Breast epithelium (tissue), 4 donors: ENCODE measurements at regions of chr6 and their contacts with region 1.

Region 1: GRCh38 chr6:162605881-162606280 is 121.7 kb downstream of the PRKN start:
- DNase-seq: no peak
- H3K4me3 ChIP-seq: no peak overlapping the region
- H3K27ac ChIP-seq: no peak overlapping the region
- H3K4me1 ChIP-seq: no peaks in the 10 kb centered on the region
- H3K27me3 ChIP-seq: no peaks in the 10 kb centered on the region
- CTCF ChIP-seq: no peak
- POLR2A ChIP-seq: no peak

Region 2: GRCh38 chr6:163036160-163036645 is 430.3 kb after region 1 on chr6:
- intact Hi-C with region 1: no loop called
- DNase-seq: no peak
- H3K4me3 ChIP-seq: no peak overlapping the region
- H3K27ac ChIP-seq: no peak overlapping the region
- H3K4me1 ChIP-seq: no peaks in the 10 kb centered on the region
- H3K27me3 ChIP-seq: no peaks in the 10 kb centered on the region
- CTCF ChIP-seq: no peak
- POLR2A ChIP-seq: no peak

Region 3: DNA sequence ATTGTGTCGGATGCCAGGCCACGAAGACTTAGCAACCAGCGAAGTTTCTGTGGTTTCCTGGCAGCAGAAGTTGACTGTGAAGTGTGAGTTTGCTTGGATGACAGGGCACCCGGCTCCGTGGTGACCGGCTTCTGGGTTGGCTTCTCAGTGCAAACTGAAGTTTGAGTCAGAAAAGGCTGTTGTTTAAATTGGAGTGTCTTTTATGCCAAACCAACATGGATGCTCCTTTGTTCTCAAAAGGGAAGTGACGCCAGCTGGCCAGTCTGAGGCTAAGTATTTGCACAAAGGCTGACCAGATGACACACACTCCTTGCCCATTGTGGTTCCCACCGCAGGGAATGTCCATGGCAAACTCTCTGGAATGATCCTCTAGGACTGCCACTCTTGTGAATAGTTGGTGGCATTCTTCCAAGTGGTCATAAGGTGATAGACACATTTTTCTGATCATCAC is 643.8 kb after region 1 on chr6:
- intact Hi-C with region 1: no loop called
- DNase-seq: no peak
- H3K4me3 ChIP-seq: no peak overlapping the region
- H3K27ac ChIP-seq: no peak overlapping the region
- H3K4me1 ChIP-seq: no peaks in the 10 kb centered on the region
- H3K27me3 ChIP-seq: no peaks in the 10 kb centered on the region
- CTCF ChIP-seq: no peak
- POLR2A ChIP-seq: no peak

Region 4: GRCh38 chr6:163900570-163900969 is 1294.7 kb after region 1 on chr6:
- intact Hi-C with region 1: loop called (anchors 5 kb)
- DNase-seq: no peak
- H3K4me3 ChIP-seq: no peak overlapping the region
- H3K27ac ChIP-seq: no peak overlapping the region
- H3K4me1 ChIP-seq: no peaks in the 10 kb centered on the region
- H3K27me3 ChIP-seq: no peaks in the 10 kb centered on the region
- CTCF ChIP-seq: no peak
- POLR2A ChIP-seq: no peak